ENCODE measurements at regions of chr17 and their contacts with region 1.

Region 1: GRCh38 chr17:63697341-63698286 is 2.3 kb downstream of the LIMD2 start:
- DNase-seq: peak; percentile 63
- H3K4me3 ChIP-seq: peak overlapping the region; percentile 76
- H3K27ac ChIP-seq: peak overlapping the region; percentile 84
- H3K4me1 ChIP-seq: peaks cover 41% of the 10 kb centered on the region
- H3K27me3 ChIP-seq: no peaks in the 10 kb centered on the region
- CTCF ChIP-seq: peak; percentile 68

Region 2: GRCh38 chr17:63653050-63653449 is 44.6 kb before region 1 on chr17:
- CTCF ChIA-PET with region 1: no interaction called
- POLR2A ChIA-PET with region 1: no interaction called
- intact Hi-C with region 1: no loop called
- DNase-seq: no peak
- H3K4me3 ChIP-seq: no peak overlapping the region
- H3K27ac ChIP-seq: no peak overlapping the region
- H3K4me1 ChIP-seq: no peaks in the 10 kb centered on the region
- H3K27me3 ChIP-seq: no peaks in the 10 kb centered on the region
- CTCF ChIP-seq: no peak

Region 3: GRCh38 chr17:63834431-63835166 is 137.0 kb after region 1 on chr17:
- CTCF ChIA-PET with region 1: no interaction called
- POLR2A ChIA-PET with region 1: no interaction called
- intact Hi-C with region 1: loop called (anchors 2 kb)
- DNase-seq: peak; percentile 95
- H3K4me3 ChIP-seq: no peak overlapping the region
- H3K27ac ChIP-seq: no peak overlapping the region
- H3K4me1 ChIP-seq: peaks cover 31% of the 10 kb centered on the region
- H3K27me3 ChIP-seq: no peaks in the 10 kb centered on the region
- CTCF ChIP-seq: peak; percentile 93